ENCODE measurements at regions of chr18 and their contacts with region 1.

Region 1: DNA sequence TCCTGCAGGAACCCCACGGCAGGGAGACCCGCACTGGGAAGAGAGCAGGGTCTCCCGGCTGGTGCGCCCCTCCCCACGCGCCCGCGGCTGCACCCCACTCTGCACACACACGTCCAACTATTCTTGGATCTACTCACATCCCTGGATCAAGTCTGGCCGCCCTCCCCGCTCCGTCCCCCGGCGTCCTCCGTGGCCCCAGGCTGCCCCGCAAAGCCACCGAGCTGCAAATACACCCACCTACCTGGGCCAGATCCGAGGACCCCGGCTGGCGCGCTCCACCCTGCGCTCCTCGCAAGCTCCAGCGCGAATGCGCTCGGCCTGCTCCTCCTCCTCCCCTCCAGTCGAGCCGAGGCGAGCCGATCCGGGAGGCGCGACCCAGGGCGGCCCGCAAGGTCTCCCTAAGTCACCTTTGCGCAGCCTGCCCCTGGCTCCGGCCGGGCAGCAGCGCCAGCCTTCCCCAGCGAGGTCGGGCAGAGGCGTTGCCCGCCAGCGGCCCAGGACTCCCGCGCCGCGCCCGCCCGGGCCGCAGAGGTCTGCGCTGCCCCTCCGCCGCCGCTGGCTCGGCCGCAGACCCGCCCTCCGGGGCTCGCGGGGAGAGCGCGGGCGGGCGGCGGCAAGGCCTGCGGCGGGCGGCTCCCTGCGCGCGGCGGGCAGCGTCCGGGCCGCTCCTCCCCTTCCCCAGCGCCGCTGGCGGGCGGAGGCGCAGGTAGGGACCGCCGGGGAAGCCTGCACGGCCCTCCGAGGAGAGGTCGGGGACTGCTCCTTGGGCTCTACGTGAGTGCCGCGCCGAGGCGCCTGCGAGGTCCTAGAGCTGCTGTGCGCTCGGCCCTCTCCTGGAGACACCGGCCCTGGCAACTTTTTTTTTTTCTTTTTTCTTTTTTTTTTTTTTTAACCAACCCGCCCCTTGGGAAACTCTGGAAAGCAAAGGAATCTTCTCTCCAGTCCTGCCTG is 126.0 kb downstream of the OSBPL1A start:
- DNase-seq: peak; percentile 79
- H3K4me3 Mint-ChIP-seq: peak overlapping the region; percentile 96
- H3K27ac Mint-ChIP-seq: peak overlapping the region; percentile 65
- H3K4me1 Mint-ChIP-seq: peaks cover 26% of the 10 kb centered on the region
- H3K27me3 Mint-ChIP-seq: no peaks in the 10 kb centered on the region
- CTCF ChIP-seq: no peak

Region 2: DNA sequence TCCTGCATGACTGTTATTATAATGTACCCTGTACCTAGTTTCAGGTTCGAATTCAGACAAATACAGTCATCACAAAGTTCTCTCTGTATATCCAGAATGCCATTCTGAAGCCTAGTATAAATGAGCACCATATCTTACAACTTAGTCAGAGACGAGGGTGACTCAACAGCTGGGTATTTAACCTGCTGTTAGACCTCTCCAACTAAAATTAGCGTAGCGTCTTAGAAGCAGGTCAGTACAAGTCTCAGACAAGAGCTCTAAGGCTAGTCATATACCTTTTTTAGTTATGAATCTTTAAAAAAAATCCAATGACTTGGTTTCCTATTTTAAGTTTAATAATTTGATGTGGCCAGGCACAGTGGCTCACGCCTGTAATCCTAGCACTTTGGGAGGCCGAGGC is 58.7 kb before region 1 on chr18:
- CTCF ChIA-PET with region 1: interaction called, 3 read pairs
- POLR2A ChIA-PET with region 1: interaction called, 14 read pairs
- intact Hi-C with region 1: loop called (anchors 2 kb)
- DNase-seq: peak; percentile 94
- H3K4me3 Mint-ChIP-seq: peak overlapping the region; percentile 33
- H3K27ac Mint-ChIP-seq: peak overlapping the region; percentile 62
- H3K4me1 Mint-ChIP-seq: peaks cover 28% of the 10 kb centered on the region
- H3K27me3 Mint-ChIP-seq: no peaks in the 10 kb centered on the region
- CTCF ChIP-seq: no peak

Region 3: GRCh38 chr18:24248359-24248758 is 23.3 kb before region 1 on chr18:
- CTCF ChIA-PET with region 1: no interaction called
- POLR2A ChIA-PET with region 1: no interaction called
- intact Hi-C with region 1: no loop called
- DNase-seq: no peak
- H3K4me3 Mint-ChIP-seq: no peak overlapping the region
- H3K27ac Mint-ChIP-seq: no peak overlapping the region
- H3K4me1 Mint-ChIP-seq: no peaks in the 10 kb centered on the region
- H3K27me3 Mint-ChIP-seq: no peaks in the 10 kb centered on the region
- CTCF ChIP-seq: no peak

Measured in MCF 10A (cell line).